ENCODE measurements at regions of chr14 and their contacts with region 1.

Region 1: GRCh38 chr14:81219210-81219758 is 1.5 kb downstream of the GTF2A1 start:
- DNase-seq: peak; percentile 84 to 96
- ATAC-seq: peak; percentile 73 to 88 (median 84)
- H3K4me3 ChIP-seq: peak overlapping the region; percentile 70 to 89 (median 84)
- H3K27ac ChIP-seq: peak overlapping the region; percentile 94 to 100 (median 98)
- H3K4me1 ChIP-seq: peaks cover 0 to 41% (median 27%) of the 10 kb centered on the region in 9 donors
- H3K27me3 ChIP-seq: no peaks in the 10 kb centered on the region
- CTCF ChIP-seq: no peak

Region 2: GRCh38 chr14:80872645-80873044 is 346.6 kb before region 1 on chr14:
- intact Hi-C with region 1: no loop called
- DNase-seq: no peak
- ATAC-seq: no peak
- H3K4me3 ChIP-seq: no peak overlapping the region
- H3K27ac ChIP-seq: no peak overlapping the region
- H3K4me1 ChIP-seq: no peaks in the 10 kb centered on the region
- H3K27me3 ChIP-seq: no peaks in the 10 kb centered on the region
- CTCF ChIP-seq: no peak

Region 3: GRCh38 chr14:81170104-81170828 is 49.0 kb before region 1 on chr14:
- intact Hi-C with region 1: loop called in 3 of 10 experiments (anchors 1 to 5 kb)
- DNase-seq: peak; percentile 93
- ATAC-seq: peak; percentile 98 to 100 (median 100)
- H3K4me3 ChIP-seq: peak overlapping the region; percentile 65 to 84 (median 74)
- H3K27ac ChIP-seq: peak overlapping the region; percentile 87 to 98 (median 92)
- H3K4me1 ChIP-seq: peaks cover 0 to 28% (median 8%) of the 10 kb centered on the region in 9 donors
- H3K27me3 ChIP-seq: no peaks in the 10 kb centered on the region
- CTCF ChIP-seq: peak; percentile 89 to 95 (median 93)

Region 4: GRCh38 chr14:81474148-81474492 is 254.8 kb after region 1 on chr14:
- intact Hi-C with region 1: no loop called
- DNase-seq: no peak
- ATAC-seq: no peak
- H3K4me3 ChIP-seq: peak overlapping the region in 1 of 10 donors; percentile 1
- H3K27ac ChIP-seq: peak overlapping the region in 3 of 10 donors; percentile 24 to 55 (median 25)
- H3K4me1 ChIP-seq: peaks cover 0 to 18% (median 3%) of the 10 kb centered on the region in 9 donors
- H3K27me3 ChIP-seq: no peaks in the 10 kb centered on the region
- CTCF ChIP-seq: no peak